Activated CD8-positive, alpha-beta T cell treated with anti-CD3 and anti-CD28 coated beads, Interleukin-2, amount 10 ng/mL, durations not matched to agents 7 days and 5 days (primary cell): ENCODE measurements at regions of chr1 and their contacts with region 1.

Region 1: DNA sequence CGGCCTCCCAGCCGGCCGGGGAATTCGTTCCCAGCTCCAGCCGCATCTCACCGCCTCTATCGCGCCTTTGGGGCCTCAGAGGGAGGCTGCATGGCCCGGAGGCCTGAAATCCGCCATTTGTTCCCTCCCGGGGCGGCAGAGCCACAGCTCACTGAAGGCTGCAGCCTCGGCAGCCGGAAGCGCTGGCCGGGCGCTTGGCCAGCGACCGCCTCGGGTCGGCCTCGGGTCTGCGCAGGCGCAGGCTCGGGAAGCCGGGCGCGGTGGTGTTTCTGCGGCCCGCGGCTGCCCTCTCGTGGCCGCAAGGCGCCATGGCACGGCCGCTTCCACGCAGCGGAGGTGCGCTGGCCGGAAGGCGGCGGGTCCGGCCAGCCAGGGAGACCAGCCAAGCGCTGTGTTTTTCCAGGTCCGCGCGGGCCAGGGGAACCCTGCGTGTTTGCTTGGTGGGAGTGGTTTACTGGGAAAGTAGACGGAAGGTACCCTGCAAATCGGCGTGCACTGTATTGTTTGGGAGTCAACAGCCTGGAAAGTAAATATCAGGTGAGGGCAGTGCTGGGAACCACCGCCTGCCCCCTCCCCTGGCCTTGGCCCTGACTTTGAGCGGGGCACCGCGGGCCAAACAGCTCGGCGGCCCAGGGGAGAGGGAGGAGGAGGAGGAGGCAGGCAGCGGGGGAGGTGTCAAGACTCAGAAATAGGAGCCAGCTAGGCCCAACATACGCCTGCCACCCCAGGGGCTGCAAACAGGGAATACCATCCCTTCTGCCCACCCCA is 52.7 kb upstream of the CD34 start:
- DNase-seq: peak; percentile 85
- ATAC-seq: peak; percentile 78
- H3K4me3 Mint-ChIP-seq: peak overlapping the region; percentile 77
- H3K27ac Mint-ChIP-seq: peak overlapping the region; percentile 64
- H3K4me1 Mint-ChIP-seq: peaks cover 15% of the 10 kb centered on the region
- H3K27me3 Mint-ChIP-seq: peaks cover 32% of the 10 kb centered on the region

Region 2: GRCh38 chr1:207579436-207579799 is 384.2 kb before region 1 on chr1:
- CTCF ChIA-PET with region 1: interaction called, 14 read pairs
- POLR2A ChIA-PET with region 1: no interaction called
- DNase-seq: peak; percentile 67
- ATAC-seq: peak; percentile 90
- H3K4me3 Mint-ChIP-seq: no peak overlapping the region
- H3K27ac Mint-ChIP-seq: no peak overlapping the region
- H3K4me1 Mint-ChIP-seq: peaks cover 6% of the 10 kb centered on the region
- H3K27me3 Mint-ChIP-seq: peaks cover 25% of the 10 kb centered on the region

Region 3: GRCh38 chr1:207868774-207869721 is 94.6 kb before region 1 on chr1:
- CTCF ChIA-PET with region 1: interaction called, 59 read pairs
- POLR2A ChIA-PET with region 1: interaction called, 4 read pairs
- DNase-seq: peak; percentile 70
- ATAC-seq: peak; percentile 69
- H3K4me3 Mint-ChIP-seq: peak overlapping the region; percentile 93
- H3K27ac Mint-ChIP-seq: peak overlapping the region; percentile 86
- H3K4me1 Mint-ChIP-seq: peaks cover 77% of the 10 kb centered on the region
- H3K27me3 Mint-ChIP-seq: no peaks in the 10 kb centered on the region

Region 4: DNA sequence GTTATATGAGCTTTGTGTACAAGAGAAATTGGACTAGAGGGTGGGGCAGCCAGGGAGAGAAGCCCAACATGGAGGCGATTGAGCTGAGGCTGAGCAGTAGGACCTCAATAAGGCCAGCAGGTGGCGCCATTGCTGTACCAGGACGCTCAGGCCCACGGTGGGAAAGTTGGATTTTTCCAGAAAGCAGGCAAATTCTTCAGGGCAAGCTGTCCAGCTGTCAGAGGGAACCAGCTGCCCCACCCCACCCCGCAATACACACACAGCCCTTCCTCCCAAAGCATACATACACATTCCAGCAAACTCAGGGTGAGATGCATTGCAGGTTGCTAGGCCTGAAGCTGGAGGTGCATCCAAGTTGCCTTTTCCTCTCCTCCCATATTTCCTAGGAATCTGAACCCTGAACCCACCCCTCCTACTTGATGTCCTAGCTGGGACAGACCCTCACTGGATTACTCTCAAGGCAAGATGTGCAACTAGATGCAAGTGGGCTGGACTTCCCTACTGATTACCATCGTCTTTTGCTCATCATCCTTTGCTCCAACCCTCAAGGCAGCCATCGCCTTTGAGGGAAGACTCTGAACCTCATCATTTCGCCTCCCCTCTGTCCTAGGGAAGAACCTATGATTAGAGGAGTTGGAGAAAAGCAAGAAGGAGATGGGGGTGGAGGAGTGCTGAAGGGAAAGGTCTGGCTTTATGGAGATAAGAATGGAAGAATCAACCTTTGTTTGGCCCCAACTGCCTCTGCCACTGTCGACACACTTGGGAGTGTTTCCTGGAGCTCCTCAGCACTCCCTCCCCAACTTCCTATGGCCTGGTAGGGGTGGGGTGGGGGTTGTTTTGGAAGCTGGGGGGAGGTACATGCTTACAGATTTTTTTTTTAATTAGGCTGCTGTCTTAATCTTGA is 78.2 kb before region 1 on chr1:
- CTCF ChIA-PET with region 1: interaction called, 275 read pairs
- POLR2A ChIA-PET with region 1: interaction called, 7 read pairs
- DNase-seq: peak; percentile 84
- ATAC-seq: peak; percentile 66
- H3K4me3 Mint-ChIP-seq: no peak overlapping the region
- H3K27ac Mint-ChIP-seq: peak overlapping the region; percentile 18
- H3K4me1 Mint-ChIP-seq: peaks cover 34% of the 10 kb centered on the region
- H3K27me3 Mint-ChIP-seq: peaks cover 2% of the 10 kb centered on the region

Region 5: GRCh38 chr1:207908107-207908734 is 55.4 kb before region 1 on chr1:
- CTCF ChIA-PET with region 1: interaction called, 11 read pairs
- POLR2A ChIA-PET with region 1: no interaction called
- DNase-seq: no peak
- ATAC-seq: no peak
- H3K4me3 Mint-ChIP-seq: no peak overlapping the region
- H3K27ac Mint-ChIP-seq: no peak overlapping the region
- H3K4me1 Mint-ChIP-seq: peaks cover 30% of the 10 kb centered on the region
- H3K27me3 Mint-ChIP-seq: peaks cover 52% of the 10 kb centered on the region

Region 6: GRCh38 chr1:207952617-207953542 is 10.7 kb before region 1 on chr1:
- CTCF ChIA-PET with region 1: interaction called, 22 read pairs
- POLR2A ChIA-PET with region 1: no interaction called
- DNase-seq: no peak
- ATAC-seq: no peak
- H3K4me3 Mint-ChIP-seq: no peak overlapping the region
- H3K27ac Mint-ChIP-seq: no peak overlapping the region
- H3K4me1 Mint-ChIP-seq: no peaks in the 10 kb centered on the region
- H3K27me3 Mint-ChIP-seq: peaks cover 41% of the 10 kb centered on the region